ENCODE measurements at regions of chr13 and their contacts with region 1.

Region 1: GRCh38 chr13:57624565-57625435 is 6.7 kb upstream of the PCDH17 start:
- DNase-seq: peak; percentile 30
- CTCF ChIP-seq: peak; percentile 90

Region 2: GRCh38 chr13:59318320-59318930 is 1693.6 kb after region 1 on chr13:
- in situ Hi-C with region 1: loop called (anchors 25 kb)
- DNase-seq: peak; percentile 26
- CTCF ChIP-seq: peak; percentile 82

Measured in GM13977 (cell line).